ENCODE measurements at regions of chr3 and their contacts with region 1.

Region 1: DNA sequence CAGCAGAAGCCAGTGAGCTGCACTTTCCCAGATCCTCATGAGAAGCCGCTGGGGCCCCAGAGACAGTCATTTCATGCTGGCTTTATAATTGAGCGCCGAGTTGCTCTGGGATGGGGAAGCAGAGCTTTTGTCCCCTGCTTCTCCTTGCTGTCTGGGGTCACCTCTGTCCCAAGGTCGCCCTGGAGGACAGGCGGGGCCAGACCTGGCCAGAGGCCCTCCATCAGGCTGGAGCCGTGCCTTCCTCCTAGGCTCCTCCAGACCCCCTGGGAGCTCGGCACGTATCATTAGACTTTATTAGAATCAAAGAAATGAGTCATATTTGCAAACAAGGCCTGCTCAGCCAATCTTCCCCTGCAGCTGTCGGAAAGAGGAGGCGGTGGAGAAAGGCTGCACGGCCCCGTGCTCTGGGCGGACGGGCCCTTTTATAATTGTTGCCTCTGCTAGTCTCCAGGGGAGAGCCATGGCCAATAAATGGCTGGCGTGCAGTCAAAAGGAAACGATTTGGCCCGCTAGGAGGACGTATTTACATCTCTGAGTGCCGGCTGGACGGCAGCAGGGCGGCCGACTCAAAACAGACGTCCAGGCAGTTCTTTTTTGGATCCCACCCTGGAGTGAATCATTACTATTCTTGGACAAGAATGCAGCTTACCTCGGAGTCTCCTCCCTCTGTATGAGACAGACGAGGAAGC is 50.4 kb downstream of the SLC6A6 start:
- DNase-seq: peak; percentile 81
- H3K4me3 ChIP-seq: no peak overlapping the region
- H3K27ac ChIP-seq: peak overlapping the region; percentile 39
- H3K4me1 ChIP-seq: peaks cover 21% of the 10 kb centered on the region
- H3K27me3 ChIP-seq: no peaks in the 10 kb centered on the region
- CTCF ChIP-seq: peak in 1 of 2 donors; percentile 7

Region 2: GRCh38 chr3:14274999-14275961 is 177.5 kb before region 1 on chr3:
- CTCF ChIA-PET with region 1: no interaction called
- dilution Hi-C with region 1: loop called (anchors 5 kb)
- in situ Hi-C with region 1: no loop called
- intact Hi-C with region 1: no loop called
- DNase-seq: no peak
- H3K4me3 ChIP-seq: no peak overlapping the region
- H3K27ac ChIP-seq: no peak overlapping the region
- H3K4me1 ChIP-seq: peaks cover 7% of the 10 kb centered on the region
- H3K27me3 ChIP-seq: no peaks in the 10 kb centered on the region
- CTCF ChIP-seq: peak; percentile 30 to 31

Region 3: DNA sequence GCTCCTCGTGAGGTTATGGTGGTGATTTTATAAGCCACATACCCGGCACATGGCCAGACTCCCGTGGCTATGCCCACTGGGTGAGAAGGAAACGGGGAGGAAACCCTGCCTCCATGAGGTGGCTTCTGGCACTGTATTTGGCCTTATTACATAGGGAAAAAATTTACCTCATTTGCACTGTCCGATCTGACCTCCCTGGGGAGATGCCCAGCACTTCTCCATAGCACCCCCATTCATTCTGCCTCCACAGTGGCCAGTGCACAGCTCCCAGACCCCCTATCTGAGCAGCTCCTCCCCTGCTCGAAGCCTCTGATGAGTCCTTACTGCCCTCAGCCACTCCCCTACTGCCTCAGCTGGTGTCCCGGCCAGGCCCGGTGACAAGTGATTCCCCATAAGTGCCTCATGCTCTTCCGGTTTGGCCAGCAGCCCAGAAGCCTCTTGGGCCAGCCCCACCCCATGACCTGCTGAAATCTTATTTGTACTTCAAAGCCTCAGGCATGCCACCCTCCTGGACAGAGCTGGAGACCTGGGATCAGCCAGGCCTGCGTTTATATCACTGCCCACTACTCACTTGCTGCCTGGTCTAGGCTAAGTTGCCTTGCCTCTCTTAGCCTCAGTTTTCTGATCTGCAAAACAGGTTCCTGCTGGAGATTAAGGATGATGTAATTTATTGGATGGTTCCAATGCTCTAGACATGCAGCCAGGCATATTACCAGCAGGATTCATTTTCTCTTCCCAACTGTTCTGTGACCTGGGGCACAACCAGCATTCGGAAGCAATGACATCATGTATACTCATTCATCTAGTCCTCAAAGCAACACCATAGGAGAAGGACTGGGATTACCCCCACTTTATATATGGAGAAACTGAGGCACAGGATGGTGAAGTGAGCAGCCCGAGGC is 81.0 kb before region 1 on chr3:
- CTCF ChIA-PET with region 1: no interaction called
- dilution Hi-C with region 1: loop called (anchors 10 kb)
- in situ Hi-C with region 1: no loop called
- intact Hi-C with region 1: no loop called
- DNase-seq: peak; percentile 52
- H3K4me3 ChIP-seq: no peak overlapping the region
- H3K27ac ChIP-seq: no peak overlapping the region
- H3K4me1 ChIP-seq: peaks cover 48% of the 10 kb centered on the region
- H3K27me3 ChIP-seq: no peaks in the 10 kb centered on the region
- CTCF ChIP-seq: peak in 1 of 2 donors; percentile 26

Region 4: GRCh38 chr3:14402304-14402811 is 50.5 kb before region 1 on chr3 and contains the start of gene SLC6A6:
- CTCF ChIA-PET with region 1: no interaction called
- dilution Hi-C with region 1: loop called (anchors 5 kb)
- in situ Hi-C with region 1: no loop called
- intact Hi-C with region 1: no loop called
- DNase-seq: peak; percentile 96
- H3K4me3 ChIP-seq: peak within 1 kb of the TSS; percentile 51 to 83 (median 63)
- H3K27ac ChIP-seq: peak within 1 kb of the TSS; percentile 67
- H3K4me1 ChIP-seq: peaks cover 19% of the 10 kb centered on the region
- H3K27me3 ChIP-seq: no peaks in the 10 kb centered on the region
- CTCF ChIP-seq: peak; percentile 25 to 66
- total RNA-seq, gene SLC6A6: 14.8 to 17.7 TPM